ENCODE measurements at regions of chr16 and their contacts with region 1.

Region 1: GRCh38 chr16:70380861-70381603 is 34.3 kb downstream of the DDX19A start:
- DNase-seq: peak; percentile 98
- H3K4me3 ChIP-seq: peak overlapping the region; percentile 89
- H3K27ac ChIP-seq: peak overlapping the region; percentile 84
- H3K4me1 ChIP-seq: peaks cover 17% of the 10 kb centered on the region
- CTCF ChIP-seq: peak; percentile 71

Region 2: GRCh38 chr16:70416748-70417616 is 36.0 kb after region 1 on chr16:
- CTCF ChIA-PET with region 1: no interaction called
- POLR2A ChIA-PET with region 1: no interaction called
- intact Hi-C with region 1: no loop called
- DNase-seq: peak; percentile 73
- H3K4me3 ChIP-seq: peak overlapping the region; percentile 15
- H3K27ac ChIP-seq: peak overlapping the region; percentile 73
- H3K4me1 ChIP-seq: peaks cover 57% of the 10 kb centered on the region
- CTCF ChIP-seq: no peak

Region 3: GRCh38 chr16:70470927-70471341 is 89.9 kb after region 1 on chr16:
- CTCF ChIA-PET with region 1: no interaction called
- POLR2A ChIA-PET with region 1: no interaction called
- intact Hi-C with region 1: loop called (anchors 5 kb)
- DNase-seq: no peak
- H3K4me3 ChIP-seq: no peak overlapping the region
- H3K27ac ChIP-seq: no peak overlapping the region
- H3K4me1 ChIP-seq: no peaks in the 10 kb centered on the region
- CTCF ChIP-seq: 0 out of 2 replicates have a peak, but pooled peaks have one; percentile 27

Region 4: DNA sequence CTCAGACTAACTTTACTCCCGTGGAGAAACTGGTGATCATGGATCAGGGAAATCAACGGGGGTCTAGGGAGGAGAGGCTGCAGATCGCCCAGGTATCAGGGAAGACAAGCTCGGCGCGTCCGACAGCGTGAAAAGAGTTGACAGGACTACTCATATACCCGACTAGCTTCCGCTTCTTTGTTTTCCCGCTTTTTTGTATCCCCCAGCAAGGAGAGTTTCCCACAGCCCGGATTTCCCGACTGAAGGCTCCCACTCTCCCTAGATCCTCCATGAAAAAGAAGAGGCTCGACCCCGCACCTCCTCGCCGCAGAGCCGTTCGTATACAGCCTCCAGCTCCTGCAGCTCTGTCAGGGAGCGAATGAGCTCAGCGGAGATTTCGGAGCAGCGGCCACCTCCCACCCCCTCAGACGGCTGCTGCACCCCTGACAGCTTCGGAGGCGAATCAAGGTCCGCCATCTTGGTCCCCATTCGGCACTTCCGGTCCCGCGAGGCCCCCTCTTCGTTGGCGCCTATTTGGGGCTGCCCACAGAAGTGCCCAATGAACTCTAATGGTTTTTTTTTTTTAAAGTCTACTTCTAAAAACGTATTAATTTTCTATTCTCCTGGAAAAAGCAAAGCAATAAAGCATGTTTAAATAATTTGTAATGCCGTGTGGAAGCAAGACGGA is 142.2 kb after region 1 on chr16 and contains the start of gene COG4:
- CTCF ChIA-PET with region 1: interaction called, 3 read pairs
- POLR2A ChIA-PET with region 1: interaction called, 8 read pairs
- intact Hi-C with region 1: loop called (anchors 1 kb)
- DNase-seq: peak; percentile 95
- H3K4me3 ChIP-seq: peak within 1 kb of the TSS; percentile 99
- H3K27ac ChIP-seq: peak within 1 kb of the TSS; percentile 88
- H3K4me1 ChIP-seq: peaks cover 47% of the 10 kb centered on the region
- CTCF ChIP-seq: no peak
- total RNA-seq, gene COG4: 41.9 and 48.8 TPM in 2 replicates